BJ (cell line): ENCODE measurements at regions of chr19 and their contacts with region 1.

Region 1: GRCh38 chr19:36047835-36048234 is 6.2 kb downstream of the THAP8 start:
- DNase-seq: no peak
- H3K4me3 ChIP-seq: no peak overlapping the region
- H3K27me3 ChIP-seq: no peaks in the 10 kb centered on the region
- CTCF ChIP-seq: no peak

Region 2: GRCh38 chr19:35805526-35806102 is 242.2 kb before region 1 on chr19:
- CTCF ChIA-PET with region 1: no interaction called
- POLR2A ChIA-PET with region 1: interaction called, 21 read pairs
- DNase-seq: no peak
- H3K4me3 ChIP-seq: no peak overlapping the region
- H3K27me3 ChIP-seq: 0 out of 2 replicates have a peak, but pooled peaks cover 2% of the 10 kb centered on the region
- CTCF ChIP-seq: no peak

Region 3: DNA sequence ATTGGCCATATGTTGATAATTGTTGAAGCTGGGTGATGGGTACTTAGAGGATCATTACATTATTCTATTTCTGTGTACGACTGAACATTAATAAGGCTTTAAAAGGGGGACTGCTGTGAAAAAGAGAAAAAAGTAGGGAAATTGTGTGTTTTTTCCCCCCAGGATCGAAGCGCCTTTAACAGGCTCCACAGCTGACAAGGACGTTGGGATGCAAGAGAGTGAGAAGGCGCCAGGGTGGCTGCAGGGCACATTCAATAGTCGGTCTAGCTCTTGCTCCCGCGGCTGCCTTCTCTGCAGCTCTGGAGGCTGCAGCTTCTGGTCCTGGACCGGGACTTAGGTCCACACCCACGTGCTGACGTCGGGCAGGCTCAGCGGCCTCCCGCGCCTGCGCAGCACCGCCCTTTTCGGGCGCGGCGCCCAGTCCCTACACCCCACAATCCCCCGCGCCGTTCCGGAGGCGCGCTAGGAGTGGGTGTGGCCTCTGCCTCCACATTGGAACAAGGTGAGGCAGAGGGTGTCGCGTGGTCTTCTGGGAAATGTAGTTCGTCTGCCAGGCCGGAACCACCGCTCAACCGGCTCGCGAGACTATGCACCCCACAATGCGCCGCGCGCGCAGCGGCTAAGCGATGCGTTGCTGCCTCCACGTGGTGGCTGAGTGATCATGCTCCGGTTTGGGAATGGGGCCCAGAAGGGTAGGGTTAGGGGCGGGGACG is 116.5 kb before region 1 on chr19:
- CTCF ChIA-PET with region 1: no interaction called
- POLR2A ChIA-PET with region 1: no interaction called
- DNase-seq: peak; percentile 98
- H3K4me3 ChIP-seq: peak overlapping the region; percentile 18; the same call in 1 of the 2 replicates
- H3K27me3 ChIP-seq: no peaks in the 10 kb centered on the region
- CTCF ChIP-seq: peak; percentile 91